Activated T-helper 2 cell treated with anti-CD3 and anti-CD28 coated beads, Interferon-gamma antibody, Interleukin-2, Interleukin-4, amounts not matched to agents 10 μg/mL and 5 μg/mL and 100 μg/mL, durations not matched to agents 14 hours and 24 hours and 36 hours (primary cell): ENCODE measurements at regions of chr2 and their contacts with region 1.

Region 1: GRCh38 chr2:174748948-174749347 is 15.3 kb downstream of the CHRNA1 start:
- DNase-seq: peak; percentile 55
- H3K4me3 Mint-ChIP-seq: no peak overlapping the region
- H3K27ac Mint-ChIP-seq: no peak overlapping the region
- H3K4me1 Mint-ChIP-seq: peaks cover 29% of the 10 kb centered on the region
- H3K27me3 Mint-ChIP-seq: peaks cover 9% of the 10 kb centered on the region

Region 2: GRCh38 chr2:174593574-174594203 is 155.3 kb before region 1 on chr2:
- intact Hi-C with region 1: loop called (anchors 5 kb)
- DNase-seq: peak; percentile 67
- H3K4me3 Mint-ChIP-seq: peak overlapping the region; percentile 86
- H3K27ac Mint-ChIP-seq: peak overlapping the region; percentile 99
- H3K4me1 Mint-ChIP-seq: peaks cover 58% of the 10 kb centered on the region
- H3K27me3 Mint-ChIP-seq: no peaks in the 10 kb centered on the region

Region 3: GRCh38 chr2:174644401-174644800 is 104.5 kb before region 1 on chr2:
- intact Hi-C with region 1: no loop called
- DNase-seq: no peak
- H3K4me3 Mint-ChIP-seq: no peak overlapping the region
- H3K27ac Mint-ChIP-seq: no peak overlapping the region
- H3K4me1 Mint-ChIP-seq: no peaks in the 10 kb centered on the region
- H3K27me3 Mint-ChIP-seq: no peaks in the 10 kb centered on the region

Region 4: DNA sequence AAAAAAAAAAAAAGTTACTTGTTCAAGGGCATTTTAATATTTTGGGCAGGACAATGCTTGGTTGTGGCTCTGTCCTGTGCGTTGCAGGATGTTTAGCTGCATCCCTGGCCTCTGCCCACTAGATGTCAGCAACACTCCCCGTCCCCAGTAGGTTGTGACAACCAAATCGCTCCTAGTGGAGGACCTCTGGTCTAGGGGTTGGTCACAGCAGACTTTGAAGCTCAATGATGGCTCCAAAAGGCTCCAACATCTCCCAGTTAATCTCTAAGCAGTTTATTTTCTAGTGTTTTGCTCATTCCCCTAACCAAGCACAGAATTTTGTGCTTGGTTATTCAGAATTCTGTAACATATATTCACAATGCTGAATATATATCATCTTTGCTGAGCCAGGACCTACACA is 51.7 kb before region 1 on chr2:
- intact Hi-C with region 1: loop called (anchors 2 kb)
- DNase-seq: peak; percentile 48
- H3K4me3 Mint-ChIP-seq: no peak overlapping the region
- H3K27ac Mint-ChIP-seq: no peak overlapping the region
- H3K4me1 Mint-ChIP-seq: no peaks in the 10 kb centered on the region
- H3K27me3 Mint-ChIP-seq: peaks cover 26% of the 10 kb centered on the region

Region 5: DNA sequence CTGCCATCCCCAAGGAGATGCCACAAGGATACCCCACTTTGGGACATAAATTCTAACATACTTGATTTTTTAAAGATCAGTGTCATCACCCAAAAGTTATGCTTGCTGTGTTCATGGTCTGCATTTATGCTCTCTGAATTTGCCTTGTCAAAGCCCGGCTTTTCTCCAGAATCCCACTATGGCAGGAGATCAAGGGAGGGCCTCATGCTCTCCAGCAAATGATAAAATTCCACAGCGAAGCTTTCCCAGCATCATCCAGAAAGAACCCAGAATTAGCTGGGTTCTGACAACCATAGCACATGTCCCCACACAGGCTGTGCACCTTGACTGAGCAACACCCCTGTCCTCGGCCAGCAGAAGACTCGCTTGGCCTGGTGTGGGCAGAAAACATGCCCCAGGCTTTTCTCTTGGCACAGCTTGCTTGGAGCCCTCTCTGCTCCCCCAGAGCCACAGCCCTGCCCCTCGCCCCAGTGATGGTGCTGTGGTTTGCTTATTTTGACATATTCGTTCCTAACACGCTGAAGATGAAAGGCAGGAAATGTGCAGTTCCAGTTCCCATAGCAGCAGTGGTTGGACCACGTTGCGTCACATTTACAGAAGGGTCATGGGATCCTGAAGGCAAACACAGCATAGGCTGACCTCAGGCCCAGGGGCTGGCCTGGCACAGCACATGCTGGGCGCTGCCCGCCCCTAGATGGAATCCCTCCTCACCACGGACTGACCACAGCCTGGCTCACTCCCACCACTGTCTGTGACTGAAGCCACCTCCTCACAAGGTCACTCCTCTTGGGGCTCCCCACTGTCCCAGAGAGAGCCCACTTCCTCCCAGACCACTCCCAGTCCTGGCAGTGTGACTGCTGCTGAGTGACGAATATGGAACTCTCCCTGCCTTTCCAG is 29.4 kb after region 1 on chr2:
- intact Hi-C with region 1: loop called (anchors 2 kb)
- DNase-seq: peak; percentile 76
- H3K4me3 Mint-ChIP-seq: no peak overlapping the region
- H3K27ac Mint-ChIP-seq: peak overlapping the region; percentile 87
- H3K4me1 Mint-ChIP-seq: peaks cover 39% of the 10 kb centered on the region
- H3K27me3 Mint-ChIP-seq: no peaks in the 10 kb centered on the region

Region 6: GRCh38 chr2:174835797-174836255 is 86.9 kb after region 1 on chr2:
- intact Hi-C with region 1: loop called (anchors 1 kb)
- DNase-seq: no peak
- H3K4me3 Mint-ChIP-seq: peak overlapping the region; percentile 58
- H3K27ac Mint-ChIP-seq: peak overlapping the region; percentile 95
- H3K4me1 Mint-ChIP-seq: peaks cover 31% of the 10 kb centered on the region
- H3K27me3 Mint-ChIP-seq: peaks cover 3% of the 10 kb centered on the region

Region 7: DNA sequence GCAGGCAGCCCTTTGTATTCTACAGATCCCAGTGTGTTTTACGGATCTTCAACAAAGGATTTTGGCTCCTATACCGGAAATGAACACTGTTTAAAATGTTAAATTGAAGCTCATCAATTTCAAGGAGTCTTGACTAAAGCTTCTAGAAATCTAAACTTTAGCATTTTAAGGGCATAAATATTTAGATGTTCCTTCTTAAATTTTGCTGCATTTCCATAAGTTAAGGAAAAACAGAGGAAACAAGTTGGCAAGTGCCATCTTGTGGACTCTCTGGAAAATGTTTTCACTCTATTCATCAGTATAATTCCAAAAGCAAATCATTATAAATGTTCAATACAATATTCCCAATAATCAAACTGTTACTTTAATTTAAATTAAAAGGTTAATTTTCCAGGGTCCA is 236.7 kb after region 1 on chr2:
- intact Hi-C with region 1: loop called (anchors 2 kb)
- DNase-seq: no peak
- H3K4me3 Mint-ChIP-seq: no peak overlapping the region
- H3K27ac Mint-ChIP-seq: no peak overlapping the region
- H3K4me1 Mint-ChIP-seq: peaks cover 2% of the 10 kb centered on the region
- H3K27me3 Mint-ChIP-seq: peaks cover 17% of the 10 kb centered on the region

Region 8: GRCh38 chr2:175167792-175168563 is 419.0 kb after region 1 on chr2 and contains the start of gene ATF2:
- intact Hi-C with region 1: loop called (anchors 5 kb)
- DNase-seq: peak; percentile 98
- H3K4me3 Mint-ChIP-seq: peak within 1 kb of the TSS; percentile 99
- H3K27ac Mint-ChIP-seq: peak within 1 kb of the TSS; percentile 99
- H3K4me1 Mint-ChIP-seq: peaks cover 47% of the 10 kb centered on the region
- H3K27me3 Mint-ChIP-seq: no peaks in the 10 kb centered on the region
- total RNA-seq, gene ATF2: 64.0 and 65.9 TPM in 2 replicates